ENCODE measurements at regions of chr7 and their contacts with region 1.

Region 1: DNA sequence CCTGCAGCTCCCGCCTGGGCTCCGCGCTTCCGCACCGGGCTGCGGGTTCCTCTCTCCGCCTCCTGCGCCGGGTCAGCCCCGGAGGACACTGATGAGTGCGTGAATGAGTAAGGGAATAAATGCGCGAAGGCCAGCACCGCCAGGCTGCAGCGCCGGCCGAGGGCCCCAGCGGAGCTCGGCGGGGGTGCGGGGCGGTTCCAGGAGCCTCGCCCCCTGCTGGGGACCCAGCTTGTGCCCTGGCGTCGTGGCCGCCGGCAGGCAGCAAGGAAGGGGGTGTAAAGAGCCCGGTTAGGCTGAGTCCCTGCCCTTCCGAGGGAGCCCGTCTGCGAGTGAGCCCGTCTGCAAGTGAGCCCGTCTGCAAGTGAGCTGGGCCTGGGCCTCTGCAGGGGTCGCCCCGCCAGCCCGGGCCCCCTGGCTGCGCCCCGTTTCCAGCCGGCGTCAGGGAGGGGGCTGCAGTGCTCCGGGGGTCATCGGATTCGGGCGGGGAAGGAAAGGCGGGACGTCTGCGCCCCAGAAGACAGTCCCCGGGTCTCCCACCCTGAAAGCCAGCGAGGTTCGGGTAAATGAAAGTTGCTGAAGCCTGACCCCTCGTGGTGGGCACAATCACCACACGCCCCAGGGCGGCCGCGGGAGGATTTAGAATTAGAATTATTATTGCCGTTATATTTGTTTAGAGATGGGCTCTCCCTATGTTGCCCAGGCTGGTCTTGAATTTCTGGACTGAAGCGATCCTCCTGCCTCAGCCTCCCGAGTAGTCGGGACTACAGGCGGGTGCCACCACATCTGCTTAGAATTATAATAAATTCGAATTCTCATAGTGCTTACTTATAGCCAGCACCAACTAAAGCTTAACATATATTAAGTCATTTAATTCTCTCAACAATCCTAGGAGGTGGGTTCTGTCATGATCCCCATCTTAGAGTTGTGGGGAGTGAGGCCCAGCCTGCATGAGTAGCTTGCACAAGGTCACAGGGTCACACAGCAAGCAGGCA is 8.6 kb upstream of the CRYGN start:
- DNase-seq: peak; percentile 73 to 87 (median 81)
- ATAC-seq: peak; percentile 87 to 88
- H3K4me3 ChIP-seq: peak overlapping the region; percentile 74
- H3K27ac ChIP-seq: no peak overlapping the region
- H3K4me1 ChIP-seq: no peaks in the 10 kb centered on the region
- H3K27me3 ChIP-seq: no peaks in the 10 kb centered on the region

Region 2: GRCh38 chr7:151368136-151368571 is 80.4 kb before region 1 on chr7:
- intact Hi-C with region 1: loop called (anchors 2 to 10 kb)
- DNase-seq: peak; percentile 82 to 92 (median 89)
- ATAC-seq: peak; percentile 94 to 95
- H3K4me3 ChIP-seq: no peak overlapping the region
- H3K27ac ChIP-seq: no peak overlapping the region
- H3K4me1 ChIP-seq: peaks cover 2% of the 10 kb centered on the region
- H3K27me3 ChIP-seq: no peaks in the 10 kb centered on the region

Region 3: DNA sequence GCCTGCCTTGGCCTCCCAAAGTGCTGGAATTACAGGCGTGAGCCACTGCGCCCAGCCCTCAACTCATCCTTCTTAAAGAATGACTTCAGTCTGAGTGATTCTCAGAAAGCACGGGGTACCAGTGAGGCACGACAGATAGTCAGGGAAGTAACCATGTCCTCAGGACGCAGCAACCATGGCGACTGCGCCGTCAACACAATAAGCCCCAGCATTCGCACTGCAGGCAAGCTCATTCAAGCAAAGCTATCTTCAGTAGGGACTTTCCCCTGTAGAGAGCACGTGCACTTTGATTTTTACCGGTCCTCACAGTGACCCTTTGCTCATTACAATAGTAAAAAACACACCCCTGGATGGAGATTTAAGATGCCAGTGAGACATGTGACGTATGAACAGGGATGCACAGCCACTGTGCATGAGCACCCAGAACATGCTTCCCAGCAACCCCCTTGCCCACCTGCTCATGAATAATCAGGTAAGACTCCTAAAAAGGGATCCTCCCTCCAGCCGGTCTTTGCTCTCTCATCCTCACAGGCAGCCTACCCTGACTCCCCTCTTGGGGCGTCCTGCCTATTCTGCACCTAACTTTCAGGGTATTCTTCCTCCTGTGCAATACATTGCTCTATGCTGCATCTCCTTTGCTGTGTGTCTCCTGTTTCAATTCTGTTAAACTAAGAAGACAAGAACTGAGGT is 47.8 kb before region 1 on chr7:
- intact Hi-C with region 1: no loop called
- DNase-seq: no peak
- ATAC-seq: no peak
- H3K4me3 ChIP-seq: no peak overlapping the region
- H3K27ac ChIP-seq: no peak overlapping the region
- H3K4me1 ChIP-seq: no peaks in the 10 kb centered on the region
- H3K27me3 ChIP-seq: no peaks in the 10 kb centered on the region

Region 4: DNA sequence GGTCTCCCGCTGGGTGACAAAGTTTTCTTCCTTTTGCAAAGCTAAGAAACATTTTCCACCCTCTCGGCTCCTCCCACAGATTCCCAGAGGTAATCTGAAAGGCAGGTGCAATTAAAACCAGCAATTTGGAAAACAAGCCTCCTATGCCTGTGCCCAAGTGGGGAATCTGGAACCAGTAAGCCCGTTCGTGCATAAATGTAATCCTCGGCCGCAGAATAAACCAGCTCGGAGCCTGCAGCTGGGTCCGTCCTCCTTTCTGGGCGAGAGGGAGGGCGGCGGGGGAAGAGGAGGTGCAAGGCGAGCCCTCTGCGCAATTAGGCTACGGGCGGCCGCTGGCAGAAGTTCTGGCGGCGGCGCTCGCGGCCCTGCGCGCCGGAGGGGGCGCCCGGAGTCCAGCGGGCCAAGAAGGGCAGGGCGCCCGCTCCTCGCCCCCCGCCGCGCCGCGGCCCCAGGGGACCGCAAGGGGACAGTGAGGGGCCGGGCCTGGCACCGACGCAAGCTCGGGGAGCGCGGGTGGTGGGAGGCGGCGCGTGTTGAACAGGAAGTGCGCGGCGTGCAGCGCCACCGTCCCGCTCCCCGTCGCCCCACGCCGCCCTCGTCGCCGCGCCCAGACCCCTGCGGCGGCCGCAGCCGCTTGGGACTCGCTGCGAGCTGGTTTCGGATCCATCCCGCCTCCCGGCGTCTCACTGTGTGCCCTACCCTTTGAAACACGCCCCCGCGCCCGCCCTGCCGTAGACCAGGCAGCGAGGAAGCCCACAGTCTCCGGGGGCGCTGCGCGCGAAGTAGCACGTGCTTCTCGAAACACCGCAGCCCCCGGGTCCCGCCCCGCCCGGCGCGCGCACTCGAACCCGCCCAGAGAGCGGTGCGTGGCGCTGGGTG is 428.6 kb after region 1 on chr7 and contains the start of gene PRKAG2:
- intact Hi-C with region 1: no loop called
- DNase-seq: peak; percentile 72 to 90 (median 90)
- ATAC-seq: peak; percentile 46 to 65
- H3K4me3 ChIP-seq: peak within 1 kb of the TSS; percentile 84
- H3K27ac ChIP-seq: peak within 1 kb of the TSS; percentile 78
- H3K4me1 ChIP-seq: peaks cover 2% of the 10 kb centered on the region
- H3K27me3 ChIP-seq: no peaks in the 10 kb centered on the region
- total RNA-seq, gene PRKAG2: 167 to 298 (median 211) TPM

Region 5: GRCh38 chr7:152859781-152860191 is 1411.2 kb after region 1 on chr7:
- intact Hi-C with region 1: no loop called
- DNase-seq: no peak
- ATAC-seq: peak in 1 of 2 donors; percentile 23
- H3K4me3 ChIP-seq: no peak overlapping the region
- H3K27ac ChIP-seq: no peak overlapping the region
- H3K4me1 ChIP-seq: no peaks in the 10 kb centered on the region
- H3K27me3 ChIP-seq: no peaks in the 10 kb centered on the region

Measured in right cardiac atrium (tissue), 5 donors.